Activated CD4-positive, alpha-beta memory T cell treated with anti-CD3 and anti-CD28 coated beads for 36 hours (primary cell): ENCODE measurements at regions of chr17 and their contacts with region 1.

Region 1: DNA sequence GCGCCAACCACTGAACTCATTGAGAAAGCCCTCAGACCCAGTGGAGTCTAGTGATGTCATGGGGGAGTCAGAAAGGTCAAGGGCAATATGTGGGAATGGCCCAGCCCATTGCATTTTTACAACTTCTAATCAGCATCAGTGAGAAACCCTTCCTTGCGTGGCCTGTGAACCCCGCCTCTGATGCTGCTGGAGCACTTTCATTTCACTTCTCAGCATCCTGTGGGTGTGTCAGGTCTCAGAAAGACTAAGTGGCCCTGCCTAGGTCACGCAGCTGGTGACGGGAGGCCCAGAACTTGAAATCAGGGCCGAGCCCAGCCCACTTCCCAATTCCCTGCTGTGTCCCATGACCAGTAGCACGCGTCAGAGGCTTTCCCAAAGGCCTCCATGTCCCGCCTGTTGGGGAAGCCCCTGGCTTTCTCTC is 6.1 kb downstream of the DNAI2 start:
- DNase-seq: peak; percentile 86
- H3K4me3 Mint-ChIP-seq: peak overlapping the region; percentile 12
- H3K27ac Mint-ChIP-seq: peak overlapping the region; percentile 90
- H3K4me1 Mint-ChIP-seq: peaks cover 69% of the 10 kb centered on the region
- H3K27me3 Mint-ChIP-seq: no peaks in the 10 kb centered on the region

Region 2: GRCh38 chr17:73231841-73232586 is 1048.1 kb before region 1 on chr17:
- CTCF ChIA-PET with region 1: no interaction called
- POLR2A ChIA-PET with region 1: no interaction called
- intact Hi-C with region 1: loop called (anchors 10 kb)
- DNase-seq: peak; percentile 98
- H3K4me3 Mint-ChIP-seq: peak overlapping the region; percentile 94
- H3K27ac Mint-ChIP-seq: peak overlapping the region; percentile 94
- H3K4me1 Mint-ChIP-seq: peaks cover 50% of the 10 kb centered on the region
- H3K27me3 Mint-ChIP-seq: no peaks in the 10 kb centered on the region

Region 3: GRCh38 chr17:74212913-74213791 is 67.0 kb before region 1 on chr17 and contains the start of gene TTYH2:
- CTCF ChIA-PET with region 1: interaction called, 3 read pairs
- POLR2A ChIA-PET with region 1: interaction called, 4 read pairs
- intact Hi-C with region 1: loop called (anchors 1 kb)
- DNase-seq: peak; percentile 82
- H3K4me3 Mint-ChIP-seq: peak within 1 kb of the TSS; percentile 74
- H3K27ac Mint-ChIP-seq: peak within 1 kb of the TSS; percentile 36
- H3K4me1 Mint-ChIP-seq: peaks cover 68% of the 10 kb centered on the region
- H3K27me3 Mint-ChIP-seq: no peaks in the 10 kb centered on the region
- total RNA-seq, gene TTYH2: 7.6 to 7.9 TPM

Region 4: GRCh38 chr17:74249590-74250270 is 30.4 kb before region 1 on chr17:
- CTCF ChIA-PET with region 1: no interaction called
- POLR2A ChIA-PET with region 1: no interaction called
- intact Hi-C with region 1: no loop called
- DNase-seq: no peak
- H3K4me3 Mint-ChIP-seq: no peak overlapping the region
- H3K27ac Mint-ChIP-seq: no peak overlapping the region
- H3K4me1 Mint-ChIP-seq: no peaks in the 10 kb centered on the region
- H3K27me3 Mint-ChIP-seq: no peaks in the 10 kb centered on the region

Region 5: GRCh38 chr17:74513987-74514631 is 234.0 kb after region 1 on chr17:
- CTCF ChIA-PET with region 1: no interaction called
- POLR2A ChIA-PET with region 1: no interaction called
- intact Hi-C with region 1: loop called (anchors 5 kb)
- DNase-seq: peak; percentile 81
- H3K4me3 Mint-ChIP-seq: peak overlapping the region; percentile 71
- H3K27ac Mint-ChIP-seq: peak overlapping the region; percentile 94
- H3K4me1 Mint-ChIP-seq: peaks cover 29% of the 10 kb centered on the region
- H3K27me3 Mint-ChIP-seq: peaks cover 20% of the 10 kb centered on the region